WTC11 (cell line): ENCODE measurements at regions of chr1 and their contacts with region 1.

Region 1: DNA sequence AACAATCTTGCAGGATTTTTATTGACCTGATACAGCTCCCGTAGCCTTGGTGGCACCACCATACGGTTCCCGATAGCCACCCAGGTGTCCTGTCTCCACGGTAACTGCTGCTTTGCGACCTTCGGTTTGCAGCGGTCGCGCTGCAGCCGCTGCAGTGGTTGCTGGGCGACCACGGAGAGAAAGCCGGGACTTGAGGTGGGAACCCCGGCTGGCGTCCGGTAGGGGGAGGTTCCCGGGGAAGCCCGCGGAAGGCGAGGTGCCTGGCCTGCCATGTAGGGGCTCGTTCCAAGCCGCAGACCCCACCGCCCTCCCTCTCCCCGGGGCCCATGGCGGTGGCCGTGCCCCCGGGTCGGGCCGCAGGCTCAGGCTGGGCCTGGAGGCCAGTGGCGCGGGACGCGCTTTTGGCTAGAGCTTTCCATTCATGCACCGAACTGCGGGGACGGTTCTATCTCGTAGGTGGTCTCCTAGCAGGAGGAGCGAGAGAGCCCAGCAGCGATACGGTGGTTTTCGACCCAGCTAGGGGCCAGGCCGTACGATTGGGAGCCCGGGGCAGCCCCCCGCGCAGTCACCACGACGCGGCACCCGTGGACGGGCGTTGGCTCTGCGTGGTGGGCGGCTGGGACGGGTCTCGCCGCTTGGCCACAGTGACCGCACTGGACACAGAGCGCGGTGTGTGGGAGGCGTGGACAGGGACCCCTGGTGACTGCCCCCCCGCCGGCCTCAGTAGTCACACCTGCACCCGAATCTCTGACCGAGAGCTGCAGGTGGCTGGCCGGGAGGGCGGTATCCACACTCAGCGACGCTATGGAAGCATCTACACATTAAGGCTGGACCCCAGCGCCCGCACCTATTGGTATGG is at the start of gene KLHDC9:
- DNase-seq: peak; percentile 91
- ATAC-seq: peak; percentile 86
- H3K4me3 Mint-ChIP-seq: peak within 1 kb of the TSS; percentile 80
- H3K27ac Mint-ChIP-seq: peak within 1 kb of the TSS; percentile 81
- H3K4me1 Mint-ChIP-seq: peaks cover 6% of the 10 kb centered on the region
- H3K27me3 Mint-ChIP-seq: peaks cover 6% of the 10 kb centered on the region; the same call in 1 of the 2 replicates
- CTCF ChIP-seq: no peak
- total RNA-seq, gene KLHDC9: 5.8 to 8.7 TPM (median 8.7 TPM) in 3 replicates

Region 2: GRCh38 chr1:161021165-161021960 is 77.1 kb before region 1 on chr1:
- CTCF ChIA-PET with region 1: interaction called, 20 read pairs
- POLR2A ChIA-PET with region 1: interaction called, 9 read pairs
- DNase-seq: peak; percentile 99
- ATAC-seq: peak; percentile 96
- H3K4me3 Mint-ChIP-seq: peak overlapping the region; percentile 87
- H3K27ac Mint-ChIP-seq: peak overlapping the region; percentile 100
- H3K4me1 Mint-ChIP-seq: peaks cover 50% of the 10 kb centered on the region
- H3K27me3 Mint-ChIP-seq: no peaks in the 10 kb centered on the region
- CTCF ChIP-seq: no peak

Region 3: GRCh38 chr1:161045750-161046571 is 52.5 kb before region 1 on chr1 and contains the start of gene USF1:
- CTCF ChIA-PET with region 1: interaction called, 26 read pairs
- POLR2A ChIA-PET with region 1: interaction called, 9 read pairs
- DNase-seq: peak; percentile 92
- ATAC-seq: peak; percentile 77
- H3K4me3 Mint-ChIP-seq: peak within 1 kb of the TSS; percentile 97
- H3K27ac Mint-ChIP-seq: peak within 1 kb of the TSS; percentile 100
- H3K4me1 Mint-ChIP-seq: peaks cover 24% of the 10 kb centered on the region
- H3K27me3 Mint-ChIP-seq: peaks cover 38% of the 10 kb centered on the region
- CTCF ChIP-seq: no peak
- total RNA-seq, gene USF1: 55.9 to 65.6 TPM (median 57.8 TPM) in 3 replicates

Region 4: DNA sequence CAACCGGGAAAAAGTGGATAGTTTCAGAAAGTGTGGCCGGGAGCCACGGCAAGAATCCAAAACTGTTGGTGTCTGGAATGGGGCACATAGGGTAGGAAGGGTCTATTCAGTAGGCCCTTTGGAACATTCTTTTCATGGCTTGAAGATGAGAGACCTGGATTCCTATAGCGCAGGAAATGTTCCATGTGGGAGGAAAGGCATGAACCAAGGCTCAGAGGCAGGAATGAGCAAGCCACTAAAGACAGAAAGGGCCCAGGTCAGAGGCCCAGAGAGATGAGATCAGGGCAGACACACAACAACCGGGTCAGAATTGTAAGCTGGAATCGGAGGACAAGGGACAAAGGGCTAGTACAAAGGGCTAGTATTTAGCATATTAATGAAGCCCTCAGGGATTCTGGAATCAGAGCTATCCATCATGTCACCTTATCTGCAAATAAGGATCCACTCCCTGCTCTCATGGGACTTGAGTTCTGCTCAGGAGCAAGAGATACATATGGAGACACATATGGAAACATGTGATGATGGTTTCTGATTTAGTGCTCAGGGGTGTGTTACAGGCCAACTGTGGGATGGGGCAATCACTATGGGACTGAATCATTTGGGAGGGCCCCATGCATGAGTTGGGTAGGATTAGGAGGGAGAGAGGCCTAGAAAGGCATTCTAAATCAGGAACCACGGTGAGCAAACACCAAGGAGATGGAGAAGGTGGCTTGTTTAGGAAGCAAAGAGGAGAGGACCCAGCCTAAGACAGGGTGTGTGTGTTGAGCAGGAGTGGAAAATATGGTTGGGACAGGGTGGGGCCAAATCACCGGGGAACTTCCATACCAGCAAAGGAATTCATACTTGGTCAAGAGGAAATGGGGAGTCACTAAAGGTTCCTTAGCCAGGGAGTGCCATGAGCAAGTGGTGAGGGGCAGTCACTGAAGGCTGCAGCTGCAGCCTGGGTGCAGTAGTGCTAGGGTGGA is 17.8 kb before region 1 on chr1:
- CTCF ChIA-PET with region 1: interaction called, 24 read pairs
- POLR2A ChIA-PET with region 1: no interaction called
- DNase-seq: no peak
- ATAC-seq: no peak
- H3K4me3 Mint-ChIP-seq: no peak overlapping the region
- H3K27ac Mint-ChIP-seq: no peak overlapping the region
- H3K4me1 Mint-ChIP-seq: peaks cover 30% of the 10 kb centered on the region
- H3K27me3 Mint-ChIP-seq: no peaks in the 10 kb centered on the region; the same call in 1 of the 2 replicates
- CTCF ChIP-seq: no peak

Region 5: GRCh38 chr1:161165742-161166668 is 67.6 kb after region 1 on chr1 and contains the start of gene PPOX:
- CTCF ChIA-PET with region 1: interaction called, 15 read pairs
- POLR2A ChIA-PET with region 1: no interaction called
- DNase-seq: peak; percentile 94
- ATAC-seq: peak; percentile 95
- H3K4me3 Mint-ChIP-seq: peak within 1 kb of the TSS; percentile 79
- H3K27ac Mint-ChIP-seq: peak within 1 kb of the TSS; percentile 13
- H3K4me1 Mint-ChIP-seq: peaks cover 8% of the 10 kb centered on the region
- H3K27me3 Mint-ChIP-seq: no peaks in the 10 kb centered on the region
- CTCF ChIP-seq: peak; percentile 28; the same call in 1 of the 2 replicates
- total RNA-seq, gene PPOX: 39.8 to 44.8 TPM (median 43.4 TPM) in 3 replicates